OCI-LY7 (cell line): ENCODE measurements at regions of chr1 and their contacts with region 1.

Region 1: GRCh38 chr1:114979278-114979891 is 50.2 kb upstream of the TSHB start:
- DNase-seq: peak; percentile 64
- H3K4me3 ChIP-seq: no peak overlapping the region
- H3K27ac ChIP-seq: no peak overlapping the region
- H3K4me1 ChIP-seq: no peaks in the 10 kb centered on the region
- CTCF ChIP-seq: peak; percentile 93

Region 2: DNA sequence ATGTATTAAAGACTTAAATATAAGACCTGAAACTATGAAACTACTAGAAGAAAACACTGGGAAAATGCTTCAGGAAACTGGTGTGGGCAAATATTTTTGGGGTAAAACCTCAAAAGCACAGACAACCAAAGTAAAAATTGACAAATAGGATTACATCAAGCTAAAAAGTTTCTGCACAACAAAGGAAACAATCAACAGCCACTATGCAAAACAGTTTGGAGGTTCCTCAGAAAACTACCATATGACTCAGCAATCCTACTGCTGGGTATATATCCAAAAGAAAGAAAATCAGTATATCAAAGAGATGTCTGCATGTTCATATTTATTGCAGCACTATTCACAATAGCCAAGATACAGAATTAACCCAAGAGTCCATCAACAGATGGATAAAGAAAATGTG is 67.4 kb after region 1 on chr1:
- CTCF ChIA-PET with region 1: no interaction called
- POLR2A ChIA-PET with region 1: no interaction called
- intact Hi-C with region 1: loop called (anchors 5 kb)
- DNase-seq: no peak
- H3K4me3 ChIP-seq: no peak overlapping the region
- H3K27ac ChIP-seq: no peak overlapping the region
- H3K4me1 ChIP-seq: no peaks in the 10 kb centered on the region
- CTCF ChIP-seq: no peak

Region 3: GRCh38 chr1:115112496-115113375 is 133.4 kb after region 1 on chr1:
- CTCF ChIA-PET with region 1: no interaction called
- POLR2A ChIA-PET with region 1: no interaction called
- intact Hi-C with region 1: loop called (anchors 1 kb)
- DNase-seq: peak; percentile 40
- H3K4me3 ChIP-seq: no peak overlapping the region
- H3K27ac ChIP-seq: no peak overlapping the region
- H3K4me1 ChIP-seq: no peaks in the 10 kb centered on the region
- CTCF ChIP-seq: peak; percentile 98

Region 4: DNA sequence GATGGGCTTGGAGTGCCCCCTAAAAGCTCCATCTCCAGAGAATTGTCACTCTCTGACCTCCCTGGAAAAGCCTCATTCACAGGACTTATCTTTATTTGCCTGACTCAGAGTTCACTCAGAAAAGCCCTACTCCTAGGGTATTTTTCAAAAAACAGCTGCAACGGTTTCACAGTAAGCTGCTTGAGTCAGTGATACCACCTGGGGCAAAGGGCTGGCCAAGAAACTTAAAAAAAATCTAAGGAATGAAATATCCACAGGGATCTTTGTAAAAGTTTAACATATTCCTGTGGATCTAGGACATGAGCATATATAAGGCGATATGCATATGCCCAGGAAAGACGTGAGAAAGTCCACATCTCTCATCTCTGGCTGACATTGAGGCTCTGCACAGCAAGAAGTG is 143.7 kb after region 1 on chr1:
- CTCF ChIA-PET with region 1: no interaction called
- POLR2A ChIA-PET with region 1: no interaction called
- intact Hi-C with region 1: no loop called
- DNase-seq: no peak
- H3K4me3 ChIP-seq: no peak overlapping the region
- H3K27ac ChIP-seq: no peak overlapping the region
- H3K4me1 ChIP-seq: no peaks in the 10 kb centered on the region
- CTCF ChIP-seq: no peak

Region 5: GRCh38 chr1:115595279-115596079 is 616.1 kb after region 1 on chr1:
- CTCF ChIA-PET with region 1: no interaction called
- POLR2A ChIA-PET with region 1: no interaction called
- intact Hi-C with region 1: loop called (anchors 10 kb)
- DNase-seq: peak; percentile 59
- H3K4me3 ChIP-seq: no peak overlapping the region
- H3K27ac ChIP-seq: no peak overlapping the region
- H3K4me1 ChIP-seq: no peaks in the 10 kb centered on the region
- CTCF ChIP-seq: peak; percentile 90